Activated B cell treated with CpG ODN at 0.5 μM for 24 hours (primary cell): ENCODE measurements at regions of chr5 and their contacts with region 1.

Region 1: GRCh38 chr5:119524485-119524884 is 72.2 kb downstream of the HSD17B4 start:
- DNase-seq: no peak
- ATAC-seq: no peak
- H3K4me3 Mint-ChIP-seq: no peak overlapping the region
- H3K27ac Mint-ChIP-seq: no peak overlapping the region
- H3K4me1 Mint-ChIP-seq: peaks cover 7% of the 10 kb centered on the region
- H3K27me3 Mint-ChIP-seq: no peaks in the 10 kb centered on the region
- CTCF ChIP-seq: no peak

Region 2: DNA sequence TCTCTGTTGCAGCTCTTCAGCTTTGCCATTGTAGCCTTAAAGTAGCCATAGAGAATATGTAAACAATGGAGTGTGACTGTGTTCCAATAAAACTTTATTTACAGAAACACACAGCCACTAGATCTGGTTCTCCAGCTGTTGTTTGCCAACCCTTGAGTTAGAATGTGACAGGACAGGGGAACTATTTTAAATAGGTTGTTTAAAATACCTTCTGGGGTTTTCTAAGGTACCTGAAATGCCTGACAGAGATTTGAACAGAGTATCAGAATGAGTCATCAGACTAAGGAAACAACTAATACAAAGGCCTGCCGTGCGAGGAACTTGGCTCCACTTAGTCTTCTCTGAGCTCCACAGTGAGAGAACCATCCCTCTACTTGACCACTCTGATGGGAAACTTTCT is 13.2 kb after region 1 on chr5:
- CTCF ChIA-PET with region 1: no interaction called
- POLR2A ChIA-PET with region 1: no interaction called
- intact Hi-C with region 1: loop called (anchors 2 kb)
- DNase-seq: no peak
- ATAC-seq: peak; percentile 74
- H3K4me3 Mint-ChIP-seq: no peak overlapping the region
- H3K27ac Mint-ChIP-seq: peak overlapping the region; percentile 25
- H3K4me1 Mint-ChIP-seq: peaks cover 12% of the 10 kb centered on the region
- H3K27me3 Mint-ChIP-seq: no peaks in the 10 kb centered on the region
- CTCF ChIP-seq: no peak